ENCODE measurements at regions of chr13 and their contacts with region 1.

Region 1: GRCh38 chr13:43915451-43915850 is 35.7 kb downstream of the LACC1 start:
- DNase-seq: no peak
- ATAC-seq: no peak
- H3K4me3 ChIP-seq: no peak overlapping the region
- H3K4me1 ChIP-seq: no peaks in the 10 kb centered on the region
- CTCF ChIP-seq: no peak

Region 2: GRCh38 chr13:43994999-43995859 is 79.8 kb after region 1 on chr13:
- intact Hi-C with region 1: no loop called
- DNase-seq: peak in 1 of 3 donors; percentile 38
- ATAC-seq: peak; percentile 61
- H3K4me3 ChIP-seq: no peak overlapping the region
- H3K4me1 ChIP-seq: no peaks in the 10 kb centered on the region
- CTCF ChIP-seq: no peak

Region 3: GRCh38 chr13:44022163-44022562 is 106.7 kb after region 1 on chr13:
- intact Hi-C with region 1: loop called in 1 of 2 experiments (anchors 10 kb)
- DNase-seq: no peak
- ATAC-seq: no peak
- H3K4me3 ChIP-seq: no peak overlapping the region
- H3K4me1 ChIP-seq: no peaks in the 10 kb centered on the region
- CTCF ChIP-seq: no peak